ENCODE measurements at regions of chr11 and their contacts with region 1.

Region 1: GRCh38 chr11:36492724-36493304 is 17.3 kb downstream of the TRAF6 start:
- DNase-seq: peak in 4 of 5 donors; percentile 15 to 51 (median 36)
- H3K4me3 ChIP-seq: no peak overlapping the region
- H3K4me3 Mint-ChIP-seq: no peak overlapping the region
- H3K27ac ChIP-seq: no peak overlapping the region
- H3K27ac Mint-ChIP-seq: peak overlapping the region in 5 of 8 donors; percentile 2 to 82 (median 12)
- H3K4me1 ChIP-seq: peaks cover 8% of the 10 kb centered on the region
- H3K4me1 Mint-ChIP-seq: peaks cover 19 to 34% (median 26%) of the 10 kb centered on the region in 3 donors
- H3K27me3 ChIP-seq: no peaks in the 10 kb centered on the region
- H3K27me3 Mint-ChIP-seq: no peaks in the 10 kb centered on the region

Region 2: GRCh38 chr11:35822815-35823495 is 669.9 kb before region 1 on chr11:
- CTCF ChIA-PET with region 1: interaction called, 12 read pairs
- POLR2A ChIA-PET with region 1: no interaction called
- DNase-seq: no peak
- H3K4me3 ChIP-seq: no peak overlapping the region
- H3K4me3 Mint-ChIP-seq: no peak overlapping the region
- H3K27ac ChIP-seq: no peak overlapping the region
- H3K27ac Mint-ChIP-seq: peak overlapping the region in 1 of 8 donors; percentile 45
- H3K4me1 ChIP-seq: peaks cover 6% of the 10 kb centered on the region
- H3K4me1 Mint-ChIP-seq: peaks cover 9 to 15% (median 14%) of the 10 kb centered on the region in 3 donors
- H3K27me3 ChIP-seq: no peaks in the 10 kb centered on the region
- H3K27me3 Mint-ChIP-seq: peaks cover 4 to 10% of the 10 kb centered on the region in 2 donors

Region 3: DNA sequence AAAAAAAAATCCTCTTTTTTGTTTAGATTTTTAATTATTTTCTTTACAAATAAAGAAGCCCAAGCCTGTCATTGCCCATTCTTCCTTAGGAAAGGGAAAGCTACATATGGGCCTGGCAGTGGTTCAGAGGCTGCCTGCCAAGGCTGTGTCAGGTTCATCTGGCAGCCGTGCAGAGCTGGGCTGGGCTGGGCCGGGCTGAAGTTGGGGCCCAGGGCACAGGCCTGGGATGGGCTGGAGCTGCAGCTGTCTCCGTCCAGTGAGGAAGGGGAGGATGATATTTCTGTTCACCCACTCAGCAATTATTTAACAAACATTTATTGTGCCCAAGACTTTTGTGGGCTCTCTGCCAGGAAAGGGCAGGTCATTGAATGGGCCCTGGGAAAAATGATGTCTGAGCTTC is 192.2 kb before region 1 on chr11:
- CTCF ChIA-PET with region 1: interaction called, 10 read pairs
- POLR2A ChIA-PET with region 1: no interaction called
- DNase-seq: no peak
- H3K4me3 ChIP-seq: no peak overlapping the region
- H3K4me3 Mint-ChIP-seq: no peak overlapping the region
- H3K27ac ChIP-seq: no peak overlapping the region
- H3K27ac Mint-ChIP-seq: no peak overlapping the region
- H3K4me1 ChIP-seq: no peaks in the 10 kb centered on the region
- H3K4me1 Mint-ChIP-seq: no peaks in the 10 kb centered on the region
- H3K27me3 ChIP-seq: no peaks in the 10 kb centered on the region
- H3K27me3 Mint-ChIP-seq: peaks cover 5 to 9% of the 10 kb centered on the region in 2 donors

Region 4: DNA sequence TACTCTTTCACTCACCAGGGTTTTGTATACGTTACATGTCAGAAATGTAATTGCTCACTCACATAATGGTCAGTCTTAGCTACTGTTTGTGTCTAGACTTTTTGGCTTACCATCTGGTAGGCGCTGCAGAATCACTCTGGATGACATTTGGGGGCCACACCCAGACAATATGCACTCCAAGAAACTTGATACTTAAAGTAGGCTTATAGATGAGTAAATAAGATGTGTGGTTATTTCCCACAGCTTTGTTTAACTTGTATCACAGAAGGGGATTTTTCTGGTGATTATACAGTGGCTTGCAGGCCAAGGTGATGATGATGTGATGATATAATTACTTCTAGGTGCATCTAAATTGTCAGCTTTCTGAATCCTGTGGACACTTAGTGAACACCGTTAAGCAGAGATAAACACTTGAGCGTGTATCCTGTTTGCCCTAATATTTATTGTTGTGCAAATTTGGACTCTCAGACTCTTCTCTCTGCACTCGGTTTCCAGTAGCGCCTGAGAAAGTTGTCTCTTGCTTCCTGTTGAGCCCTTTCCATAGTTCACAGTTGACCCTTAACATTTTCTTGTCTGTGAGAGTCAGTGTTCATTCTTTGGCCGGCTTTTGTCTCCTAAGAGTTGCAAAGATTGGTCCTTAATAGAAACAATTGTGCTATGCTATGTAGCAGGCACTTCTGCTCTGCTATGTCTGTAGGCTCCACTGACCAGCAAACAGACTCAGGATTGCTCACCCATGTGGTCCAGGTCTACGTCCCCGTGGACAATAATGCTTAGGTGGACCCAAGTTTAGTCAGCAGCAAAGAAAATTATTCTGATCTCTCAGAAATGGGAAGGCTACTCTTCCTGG is 107.5 kb before region 1 on chr11:
- CTCF ChIA-PET with region 1: interaction called, 11 read pairs
- POLR2A ChIA-PET with region 1: no interaction called
- DNase-seq: peak in 1 of 5 donors; percentile 16
- H3K4me3 ChIP-seq: peak overlapping the region; percentile 11
- H3K4me3 Mint-ChIP-seq: peak overlapping the region in 6 of 7 donors; percentile 25 to 82 (median 28)
- H3K27ac ChIP-seq: peak overlapping the region; percentile 46
- H3K27ac Mint-ChIP-seq: peak overlapping the region; percentile 64 to 86 (median 82)
- H3K4me1 ChIP-seq: peaks cover 13% of the 10 kb centered on the region
- H3K4me1 Mint-ChIP-seq: peaks cover 71 to 89% (median 89%) of the 10 kb centered on the region in 3 donors
- H3K27me3 ChIP-seq: no peaks in the 10 kb centered on the region
- H3K27me3 Mint-ChIP-seq: peaks cover 0 to 1% of the 10 kb centered on the region in 2 donors

Region 5: GRCh38 chr11:36441610-36442208 is 51.1 kb before region 1 on chr11:
- CTCF ChIA-PET with region 1: no interaction called
- POLR2A ChIA-PET with region 1: no interaction called
- DNase-seq: no peak
- H3K4me3 ChIP-seq: no peak overlapping the region
- H3K4me3 Mint-ChIP-seq: no peak overlapping the region
- H3K27ac ChIP-seq: no peak overlapping the region
- H3K27ac Mint-ChIP-seq: peak overlapping the region in 3 of 8 donors; percentile 42 to 84 (median 55)
- H3K4me1 ChIP-seq: no peaks in the 10 kb centered on the region
- H3K4me1 Mint-ChIP-seq: peaks cover 31 to 63% (median 53%) of the 10 kb centered on the region in 3 donors
- H3K27me3 ChIP-seq: no peaks in the 10 kb centered on the region
- H3K27me3 Mint-ChIP-seq: peaks cover 0 to 1% of the 10 kb centered on the region in 2 donors

Region 6: DNA sequence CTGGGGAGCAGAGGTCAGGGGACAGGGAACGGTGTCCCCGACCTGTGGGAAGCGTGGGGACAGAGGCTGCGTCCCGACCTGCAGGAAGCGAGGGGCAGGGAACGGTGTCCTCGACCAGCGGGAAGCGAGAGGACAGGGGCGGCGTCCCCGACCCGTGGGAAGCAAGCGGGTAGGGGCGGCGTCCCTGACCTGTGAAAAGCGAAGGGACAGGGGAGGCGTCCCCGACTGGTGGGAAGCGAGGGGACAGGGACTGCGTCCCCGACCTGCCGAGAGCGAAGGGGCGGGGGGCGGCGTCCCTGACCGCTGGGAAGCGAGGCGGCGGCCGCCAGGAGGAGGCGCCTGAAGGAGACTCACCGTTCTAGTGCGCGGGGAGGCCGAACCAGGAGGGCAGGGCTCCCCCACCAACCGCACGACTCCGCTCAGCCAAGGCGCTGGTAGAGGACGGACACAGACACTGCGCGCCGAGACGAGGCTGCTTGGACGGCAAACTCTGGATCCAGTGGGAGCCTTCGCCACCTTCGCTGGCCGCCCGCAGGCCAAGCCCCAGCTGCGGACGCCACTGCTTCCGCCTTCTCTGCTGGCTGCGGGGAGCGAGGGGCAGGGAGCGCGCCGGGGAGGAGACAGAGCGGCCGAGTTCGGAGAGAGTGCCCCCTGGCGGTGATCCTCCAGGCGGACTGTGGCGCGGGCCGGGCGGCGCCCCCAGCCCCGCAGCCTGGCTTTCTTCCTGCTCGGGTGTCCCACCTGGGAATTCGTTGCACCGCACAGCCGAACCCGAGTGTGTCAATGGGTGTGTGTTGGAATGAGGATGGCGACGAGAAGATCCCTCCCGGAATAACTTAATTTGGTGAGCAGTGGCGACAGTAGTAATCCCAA is 17.1 kb after region 1 on chr11 and contains the start of gene TRAF6:
- CTCF ChIA-PET with region 1: interaction called, 27 read pairs
- POLR2A ChIA-PET with region 1: interaction called, 3 read pairs
- DNase-seq: peak; percentile 84 to 90 (median 85)
- H3K4me3 ChIP-seq: peak within 1 kb of the TSS; percentile 83
- H3K4me3 Mint-ChIP-seq: peak within 1 kb of the TSS; percentile 95 to 99 (median 98)
- H3K27ac ChIP-seq: peak within 1 kb of the TSS; percentile 82
- H3K27ac Mint-ChIP-seq: peak within 1 kb of the TSS; percentile 88 to 98 (median 94)
- H3K4me1 ChIP-seq: peaks cover 26% of the 10 kb centered on the region
- H3K4me1 Mint-ChIP-seq: peaks cover 31 to 44% (median 37%) of the 10 kb centered on the region in 3 donors
- H3K27me3 ChIP-seq: no peaks in the 10 kb centered on the region
- H3K27me3 Mint-ChIP-seq: peaks cover 1 to 10% of the 10 kb centered on the region in 2 donors
- total RNA-seq, gene TRAF6: 14.4 to 16.6 TPM

Region 7: DNA sequence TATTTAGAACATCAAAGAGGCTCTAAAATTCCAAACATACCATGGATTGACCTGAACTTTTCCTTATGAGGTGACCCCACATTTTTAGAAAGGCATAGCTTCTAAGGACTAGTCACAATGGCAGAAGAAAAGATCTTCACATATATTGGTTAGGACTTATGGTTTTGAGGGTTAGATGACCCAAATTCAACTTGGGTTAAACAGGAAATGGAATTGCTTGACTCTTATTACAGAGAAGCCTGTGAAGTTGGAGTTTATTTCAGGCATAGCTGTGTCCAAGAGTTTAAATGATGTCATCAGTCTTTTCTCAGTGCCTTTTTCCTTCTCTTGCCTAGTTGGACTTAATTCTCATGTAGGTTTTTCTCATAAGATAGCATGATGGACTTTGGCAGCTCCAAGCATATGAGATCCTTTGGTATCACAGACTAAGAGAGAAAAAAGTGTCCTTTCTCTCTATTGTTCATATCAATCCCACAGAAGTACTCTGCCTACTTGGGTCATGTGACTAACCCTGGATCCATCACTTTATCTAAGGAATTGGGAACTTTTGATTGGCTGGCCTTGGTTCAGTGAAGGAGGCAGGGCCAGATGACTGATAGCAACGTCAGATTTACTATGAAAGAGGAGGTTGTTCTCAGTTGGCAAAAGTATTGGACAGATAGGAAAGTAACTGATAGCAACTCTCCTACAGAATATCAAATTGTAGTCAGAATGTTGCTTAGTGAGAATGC is 57.7 kb after region 1 on chr11:
- CTCF ChIA-PET with region 1: no interaction called
- POLR2A ChIA-PET with region 1: no interaction called
- DNase-seq: no peak
- H3K4me3 ChIP-seq: no peak overlapping the region
- H3K4me3 Mint-ChIP-seq: peak overlapping the region in 3 of 7 donors; percentile 23 to 66 (median 50)
- H3K27ac ChIP-seq: no peak overlapping the region
- H3K27ac Mint-ChIP-seq: peak overlapping the region in 5 of 8 donors; percentile 11 to 94 (median 63)
- H3K4me1 ChIP-seq: no peaks in the 10 kb centered on the region
- H3K4me1 Mint-ChIP-seq: peaks cover 15 to 24% (median 23%) of the 10 kb centered on the region in 3 donors
- H3K27me3 ChIP-seq: no peaks in the 10 kb centered on the region
- H3K27me3 Mint-ChIP-seq: peaks cover 10 to 15% of the 10 kb centered on the region in 2 donors

Measured in CD8-positive, alpha-beta memory T cell (primary cell).